PC-9 (cell line): ENCODE measurements at regions of chr2 and their contacts with region 1.

Region 1: DNA sequence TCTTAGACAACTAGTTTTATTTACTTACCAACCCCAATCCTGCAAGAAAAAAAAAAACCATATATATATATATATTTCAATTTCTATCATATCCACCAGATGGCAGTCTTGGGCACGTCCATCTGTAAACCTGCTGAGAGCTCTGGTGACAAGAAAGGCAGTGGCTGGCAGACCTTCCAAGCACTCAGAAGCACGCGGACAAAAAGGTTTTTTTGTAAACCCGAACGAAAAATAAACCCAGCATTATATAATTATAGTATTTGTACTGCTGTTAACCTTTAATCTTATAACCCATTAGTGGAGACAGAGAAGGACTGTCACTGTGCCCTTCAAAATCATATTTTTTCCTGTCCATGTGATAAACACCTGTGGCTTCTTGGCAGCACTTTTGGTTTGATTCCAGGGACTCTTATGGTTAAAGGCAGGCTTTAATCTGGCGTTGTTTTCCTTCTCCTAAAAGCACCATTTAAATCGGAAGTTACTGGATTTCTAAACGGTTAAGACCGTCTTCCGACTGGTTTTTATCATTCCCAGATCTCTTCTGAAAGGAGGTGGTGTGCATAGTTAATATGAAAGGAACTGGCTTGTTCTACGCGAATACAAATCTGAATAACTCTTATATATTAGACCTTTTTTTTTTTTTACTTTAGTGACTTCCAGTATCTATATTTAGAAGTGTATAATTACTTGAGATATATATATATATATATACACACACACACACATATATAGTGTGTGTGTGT is 31.0 kb upstream of the SLC3A1 start:
- DNase-seq: peak; percentile 41 to 67
- H3K4me3 ChIP-seq: peak overlapping the region; percentile 33; the same call in 1 of the 2 replicates
- H3K27ac ChIP-seq: no peak overlapping the region
- H3K4me1 ChIP-seq: peaks cover 17% of the 10 kb centered on the region
- H3K27me3 ChIP-seq: no peaks in the 10 kb centered on the region
- CTCF ChIP-seq: peak; percentile 87

Region 2: GRCh38 chr2:44184106-44184505 is 60.2 kb before region 1 on chr2:
- CTCF ChIA-PET with region 1: interaction called, 10 read pairs
- POLR2A ChIA-PET with region 1: no interaction called
- intact Hi-C with region 1: no loop called
- DNase-seq: no peak
- H3K4me3 ChIP-seq: no peak overlapping the region
- H3K27ac ChIP-seq: no peak overlapping the region
- H3K4me1 ChIP-seq: no peaks in the 10 kb centered on the region
- H3K27me3 ChIP-seq: no peaks in the 10 kb centered on the region
- CTCF ChIP-seq: no peak

Region 3: GRCh38 chr2:44342854-44343253 is 98.6 kb after region 1 on chr2:
- CTCF ChIA-PET with region 1: no interaction called
- POLR2A ChIA-PET with region 1: no interaction called
- intact Hi-C with region 1: loop called (anchors 5 kb)
- DNase-seq: no peak
- H3K4me3 ChIP-seq: no peak overlapping the region
- H3K27ac ChIP-seq: no peak overlapping the region
- H3K4me1 ChIP-seq: no peaks in the 10 kb centered on the region
- H3K27me3 ChIP-seq: no peaks in the 10 kb centered on the region
- CTCF ChIP-seq: peak; percentile 73

Region 4: GRCh38 chr2:44392338-44392943 is 148.1 kb after region 1 on chr2:
- CTCF ChIA-PET with region 1: interaction called, 3 read pairs
- POLR2A ChIA-PET with region 1: no interaction called
- intact Hi-C with region 1: loop called (anchors 10 kb)
- DNase-seq: peak in 1 of 2 experiments; percentile 46
- H3K4me3 ChIP-seq: no peak overlapping the region
- H3K27ac ChIP-seq: no peak overlapping the region
- H3K4me1 ChIP-seq: no peaks in the 10 kb centered on the region
- H3K27me3 ChIP-seq: no peaks in the 10 kb centered on the region
- CTCF ChIP-seq: peak; percentile 94

Region 5: DNA sequence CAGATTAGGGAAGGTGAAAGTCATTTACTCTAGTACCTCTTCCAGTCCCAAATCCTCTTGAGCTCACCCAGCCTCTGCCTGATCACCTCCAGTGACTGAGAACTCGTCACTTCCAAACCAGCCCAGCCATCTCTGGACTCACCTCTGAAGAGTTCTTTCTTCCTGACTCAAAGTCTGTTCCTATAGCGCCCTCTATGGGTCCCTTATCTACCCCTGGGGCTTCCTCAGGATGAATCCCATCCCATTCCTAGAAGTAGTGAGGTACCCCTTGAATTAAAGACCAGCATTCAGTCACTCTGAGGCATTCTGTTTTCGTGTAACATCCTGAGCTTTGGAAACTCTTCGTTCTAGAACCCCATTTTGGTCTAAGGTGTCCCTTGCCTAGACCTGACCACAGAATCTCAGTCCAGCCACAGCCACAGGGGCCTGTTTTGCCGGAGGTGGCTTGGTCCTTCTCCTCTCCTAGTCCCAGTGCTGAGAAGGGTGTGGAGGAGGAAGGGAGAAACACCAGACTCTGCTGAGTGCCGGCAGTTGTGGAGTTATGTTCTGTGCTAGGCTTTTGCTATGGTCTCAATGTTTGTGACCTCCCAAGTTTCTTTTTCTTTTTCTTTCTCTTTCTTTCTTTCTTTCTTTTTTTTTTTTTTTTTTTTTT is 729.9 kb after region 1 on chr2:
- CTCF ChIA-PET with region 1: interaction called, 3 read pairs
- POLR2A ChIA-PET with region 1: no interaction called
- intact Hi-C with region 1: loop called (anchors 2 kb)
- DNase-seq: peak; percentile 50 to 77
- H3K4me3 ChIP-seq: no peak overlapping the region
- H3K27ac ChIP-seq: no peak overlapping the region
- H3K4me1 ChIP-seq: no peaks in the 10 kb centered on the region
- H3K27me3 ChIP-seq: no peaks in the 10 kb centered on the region
- CTCF ChIP-seq: peak; percentile 88